ENCODE measurements at regions of chr14 and their contacts with region 1.

Region 1: GRCh38 chr14:35826218-35826951 is at the start of gene BRMS1L:
- DNase-seq: peak; percentile 91 to 98 (median 96)
- ATAC-seq: peak; percentile 97 to 98
- H3K4me3 Mint-ChIP-seq: peak within 1 kb of the TSS; percentile 87 to 97 (median 92)
- H3K27ac Mint-ChIP-seq: peak within 1 kb of the TSS; percentile 70 to 97 (median 92)
- H3K4me1 Mint-ChIP-seq: peaks cover 12 to 24% (median 17%) of the 10 kb centered on the region in 4 donors
- H3K27me3 Mint-ChIP-seq: no peaks in the 10 kb centered on the region
- polyA plus RNA-seq, gene BRMS1L: 1.8 to 3.6 (median 2.7) TPM

Region 2: DNA sequence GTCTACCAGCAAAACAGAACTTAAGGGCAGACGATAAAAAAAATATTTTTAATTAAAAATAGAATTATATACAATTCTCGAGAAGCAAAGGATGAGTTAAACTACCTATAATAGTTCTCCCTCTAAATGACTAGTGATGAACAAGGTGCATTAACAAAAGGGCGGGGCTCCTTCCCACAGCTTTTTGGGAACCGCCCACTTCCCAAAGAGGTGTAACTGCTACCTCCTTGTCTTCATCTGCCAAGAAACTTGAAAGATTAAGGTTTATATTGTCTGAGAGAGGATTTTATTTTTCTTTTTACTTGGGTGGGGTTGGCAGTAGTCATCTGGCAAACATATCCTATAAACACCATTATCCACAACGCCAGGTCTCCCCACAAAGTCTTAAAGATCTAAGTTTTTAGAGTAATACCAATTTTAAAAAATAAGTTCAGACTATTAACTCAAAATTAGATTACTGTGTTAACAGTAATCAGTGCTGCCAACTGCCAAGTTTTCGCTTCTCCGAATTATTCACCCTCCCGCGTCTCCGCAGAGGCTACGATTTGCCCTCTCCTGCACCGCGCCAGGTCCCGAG is 18.2 kb before region 1 on chr14:
- POLR2A ChIA-PET with region 1: interaction called, 15 read pairs
- DNase-seq: peak in 3 of 10 donors; percentile 7 to 18 (median 17)
- ATAC-seq: no peak
- H3K4me3 Mint-ChIP-seq: peak overlapping the region; percentile 88 to 99 (median 97)
- H3K27ac Mint-ChIP-seq: peak overlapping the region; percentile 85 to 98 (median 96)
- H3K4me1 Mint-ChIP-seq: peaks cover 15 to 41% (median 38%) of the 10 kb centered on the region in 4 donors
- H3K27me3 Mint-ChIP-seq: peaks cover 0 to 2% (median 0%) of the 10 kb centered on the region in 5 donors

Measured in naive thymus-derived CD8-positive, alpha-beta T cell (primary cell).